K562 (cell line): ENCODE measurements at regions of chr1 and their contacts with region 1.

Region 1: DNA sequence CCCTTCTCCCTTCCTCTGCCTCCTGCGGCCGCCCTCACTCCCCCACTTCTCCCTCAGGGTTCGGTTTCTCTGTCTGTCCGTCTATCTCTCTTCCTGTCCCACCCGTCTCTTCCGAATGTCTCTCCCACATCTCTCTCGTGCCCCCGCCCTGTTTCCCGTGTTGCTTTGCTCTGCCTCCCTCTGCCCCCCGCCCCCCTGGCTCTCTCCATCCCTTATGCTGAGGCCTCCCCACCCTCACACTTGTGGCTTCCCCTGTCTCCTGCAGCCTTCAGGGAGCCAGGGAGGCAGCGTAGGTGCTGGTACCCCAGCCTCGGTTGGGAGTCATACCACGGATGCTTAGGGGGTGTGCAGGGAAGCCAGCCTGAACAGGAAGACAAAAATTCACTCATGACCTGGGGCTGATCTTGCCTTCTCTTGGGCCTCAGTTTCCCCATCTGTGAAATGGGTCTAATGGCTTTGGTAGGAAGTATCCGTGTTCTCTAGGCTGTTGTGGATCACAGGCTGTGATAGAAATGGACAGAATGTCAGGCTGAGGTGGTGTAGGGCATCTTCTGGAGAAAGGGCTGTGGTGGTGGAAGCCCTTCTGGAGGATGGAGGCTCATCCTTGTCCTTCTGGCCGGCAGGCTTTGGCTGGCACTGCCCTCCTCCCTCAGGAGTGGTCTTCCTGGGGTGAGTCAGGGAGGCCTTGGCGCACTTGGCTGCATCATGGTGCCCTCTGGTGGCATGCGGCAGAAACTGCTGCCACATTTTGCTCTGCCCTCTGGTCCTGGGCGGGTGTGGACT is 55.5 kb downstream of the FOXO6 start:
- DNase-seq: peak; percentile 75 to 86 (median 79)
- ATAC-seq: peak; percentile 88
- H3K4me3 ChIP-seq: no peak overlapping the region
- H3K27ac ChIP-seq: no peak overlapping the region
- H3K4me1 ChIP-seq: peaks cover 0 to 3% of the 10 kb centered on the region in 2 experiments; a peak in 1 of 5 replicates
- H3K27me3 ChIP-seq: peaks cover 5 to 9% of the 10 kb centered on the region in 2 experiments; a peak in 2 of 5 replicates
- CTCF ChIP-seq: peak; percentile 91 to 96 (median 95)
- EP300 ChIP-seq: no peak
- POLR2A ChIP-seq: no peak
- RAD21 ChIP-seq: peak; percentile 94 to 99

Region 2: GRCh38 chr1:40861224-40862003 is 555.3 kb before region 1 on chr1:
- CTCF ChIA-PET with region 1: no interaction called
- POLR2A ChIA-PET with region 1: no interaction called
- in situ Hi-C with region 1: no loop called
- intact Hi-C with region 1: no loop called
- DNase-seq: no peak
- ATAC-seq: no peak
- H3K4me3 ChIP-seq: peak overlapping the region; percentile 45
- H3K27ac ChIP-seq: no peak overlapping the region
- H3K4me1 ChIP-seq: peaks cover 29 to 52% of the 10 kb centered on the region in 2 experiments
- H3K27me3 ChIP-seq: peaks cover 0 to 2% of the 10 kb centered on the region in 2 experiments; a peak in 1 of 5 replicates
- CTCF ChIP-seq: no peak
- EP300 ChIP-seq: no peak
- POLR2A ChIP-seq: no peak
- RAD21 ChIP-seq: no peak

Region 3: DNA sequence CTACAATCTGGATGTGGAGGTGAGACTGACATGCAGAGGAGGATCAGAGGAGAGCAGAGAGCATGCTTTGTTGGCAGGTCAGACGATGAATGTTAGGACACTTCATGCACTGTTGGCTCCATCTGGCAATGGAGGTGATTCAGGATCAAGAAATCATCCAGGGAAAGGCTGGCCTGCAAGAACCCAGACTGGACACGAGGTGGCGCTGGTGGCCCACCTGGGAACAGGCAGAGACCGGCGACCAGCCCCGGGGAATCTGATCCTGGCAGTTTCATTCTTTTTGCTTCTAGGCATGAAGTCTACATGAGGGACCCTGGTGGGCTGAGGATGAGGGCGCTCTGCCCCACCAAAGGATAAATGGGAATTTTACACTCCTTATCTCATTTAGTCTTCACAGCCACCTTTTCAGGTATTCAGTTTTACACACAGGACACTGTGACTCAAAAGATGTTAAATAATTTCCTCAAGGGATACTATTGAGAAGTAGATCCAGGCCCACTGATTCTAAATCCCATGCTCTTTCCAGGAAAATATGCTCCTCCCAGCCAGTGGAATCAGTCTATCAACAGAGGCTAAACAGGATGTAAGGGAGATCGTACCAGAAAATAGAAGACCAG is 148.5 kb before region 1 on chr1:
- CTCF ChIA-PET with region 1: interaction called, 29 read pairs
- POLR2A ChIA-PET with region 1: no interaction called
- in situ Hi-C with region 1: no loop called
- intact Hi-C with region 1: loop called (anchors 1 kb)
- DNase-seq: peak; percentile 81 to 90 (median 89)
- ATAC-seq: peak; percentile 92
- H3K4me3 ChIP-seq: no peak overlapping the region
- H3K27ac ChIP-seq: no peak overlapping the region
- H3K4me1 ChIP-seq: no peaks in the 10 kb centered on the region; a peak in 1 of 5 replicates
- H3K27me3 ChIP-seq: peaks cover 20 to 24% of the 10 kb centered on the region in 2 experiments; a peak in 4 of 5 replicates
- CTCF ChIP-seq: peak; percentile 95 to 99 (median 98)
- EP300 ChIP-seq: no peak
- POLR2A ChIP-seq: no peak
- RAD21 ChIP-seq: peak; percentile 93 to 97

Region 4: DNA sequence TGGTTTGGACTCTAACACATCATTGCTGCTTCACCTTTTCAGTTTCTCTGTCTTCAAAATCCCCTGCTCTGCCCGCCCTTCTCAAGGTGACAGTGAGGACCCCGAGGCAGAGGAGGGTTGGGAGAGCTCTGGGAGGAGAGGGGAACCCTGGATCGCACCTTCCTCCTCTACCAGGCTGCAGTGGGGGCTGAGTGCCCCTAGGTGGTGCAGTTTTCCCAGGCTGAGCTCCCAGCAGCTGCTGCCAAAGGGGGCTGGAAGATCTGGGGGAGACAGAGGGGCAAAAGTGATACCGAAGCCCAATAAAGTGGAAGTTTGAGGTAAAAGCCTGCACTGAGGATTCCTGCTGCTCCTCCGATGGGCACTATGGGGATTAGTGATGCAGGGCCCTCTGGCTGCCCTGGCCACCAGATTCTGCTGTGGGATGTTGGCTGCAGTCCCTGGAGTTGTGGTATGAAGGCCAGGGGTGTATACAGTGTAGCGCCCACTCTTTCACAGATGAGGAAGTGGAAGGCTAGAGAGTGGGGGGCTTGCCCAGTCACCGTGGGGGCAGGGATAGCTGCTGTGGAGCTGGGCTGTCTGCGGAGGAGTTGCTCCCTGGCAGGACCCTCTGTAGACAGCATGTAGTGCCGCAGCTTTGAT is 133.9 kb before region 1 on chr1:
- CTCF ChIA-PET with region 1: interaction called, 12 read pairs
- POLR2A ChIA-PET with region 1: interaction called, 3 read pairs
- in situ Hi-C with region 1: no loop called
- intact Hi-C with region 1: loop called (anchors 1 kb)
- DNase-seq: peak; percentile 52 to 76 (median 70)
- ATAC-seq: peak; percentile 93
- H3K4me3 ChIP-seq: no peak overlapping the region
- H3K27ac ChIP-seq: no peak overlapping the region
- H3K4me1 ChIP-seq: no peaks in the 10 kb centered on the region
- H3K27me3 ChIP-seq: peaks cover 13 to 52% of the 10 kb centered on the region in 2 experiments; a peak in 4 of 5 replicates
- CTCF ChIP-seq: peak; percentile 82 to 92 (median 84)
- EP300 ChIP-seq: no peak
- POLR2A ChIP-seq: no peak
- RAD21 ChIP-seq: peak; percentile 56 to 82

Region 5: DNA sequence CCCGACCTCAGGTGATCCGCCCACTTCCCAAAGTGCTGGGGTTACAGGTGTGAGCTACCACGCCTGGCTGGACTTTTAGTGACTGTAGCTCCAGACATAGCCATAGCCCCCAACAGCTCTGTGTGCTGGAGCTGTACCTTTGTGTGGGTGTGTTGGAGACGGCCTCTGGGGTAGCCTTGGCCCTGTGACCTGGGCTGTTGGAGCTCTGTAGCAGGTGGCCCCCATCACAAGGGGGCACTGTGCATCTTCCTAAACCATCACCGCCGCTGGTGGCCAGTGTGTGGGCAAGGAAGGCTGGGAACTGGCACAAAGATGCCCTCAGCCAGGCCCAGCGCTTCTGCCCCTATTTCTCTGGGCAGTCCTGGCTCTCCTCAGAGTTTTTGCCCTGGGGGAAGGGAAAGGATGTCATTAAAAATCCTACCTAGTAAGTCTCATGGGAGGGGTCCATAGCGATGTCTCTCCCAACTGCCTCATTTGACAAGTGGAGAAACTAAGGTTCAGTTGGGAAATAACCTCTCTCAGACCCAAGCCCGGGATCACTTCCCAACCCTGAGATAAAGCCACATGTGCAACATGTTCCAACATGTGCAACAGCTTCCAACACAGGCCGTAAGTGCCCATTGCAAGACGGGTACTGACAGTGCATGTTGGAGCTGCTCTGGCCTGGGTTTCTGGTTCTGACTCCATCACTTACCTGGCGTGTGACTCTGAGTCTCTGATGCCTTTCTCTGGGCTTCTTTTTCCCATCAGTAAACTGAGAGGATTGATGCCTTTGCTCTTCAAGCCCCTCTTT is 93.7 kb before region 1 on chr1:
- CTCF ChIA-PET with region 1: interaction called, 60 read pairs
- POLR2A ChIA-PET with region 1: interaction called, 4 read pairs
- in situ Hi-C with region 1: loop called (anchors 5 kb)
- intact Hi-C with region 1: loop called (anchors 1 kb)
- DNase-seq: peak; percentile 60 to 75 (median 62)
- ATAC-seq: peak; percentile 95
- H3K4me3 ChIP-seq: no peak overlapping the region
- H3K27ac ChIP-seq: no peak overlapping the region
- H3K4me1 ChIP-seq: no peaks in the 10 kb centered on the region
- H3K27me3 ChIP-seq: peaks cover 15 to 48% of the 10 kb centered on the region in 2 experiments
- CTCF ChIP-seq: peak; percentile 85 to 90 (median 87)
- EP300 ChIP-seq: no peak
- POLR2A ChIP-seq: no peak
- RAD21 ChIP-seq: peak; percentile 94 to 96

Region 6: GRCh38 chr1:41329662-41330587 is 86.8 kb before region 1 on chr1:
- CTCF ChIA-PET with region 1: interaction called, 3 read pairs
- POLR2A ChIA-PET with region 1: interaction called, 4 read pairs
- in situ Hi-C with region 1: loop called (anchors 5 kb)
- intact Hi-C with region 1: no loop called
- DNase-seq: no peak
- ATAC-seq: no peak
- H3K4me3 ChIP-seq: no peak overlapping the region
- H3K27ac ChIP-seq: no peak overlapping the region
- H3K4me1 ChIP-seq: peaks cover 0 to 6% of the 10 kb centered on the region in 2 experiments; a peak in 4 of 5 replicates
- H3K27me3 ChIP-seq: peaks cover 0 to 21% of the 10 kb centered on the region in 2 experiments; a peak in 3 of 5 replicates
- CTCF ChIP-seq: no peak
- EP300 ChIP-seq: no peak
- POLR2A ChIP-seq: no peak
- RAD21 ChIP-seq: no peak

Region 7: DNA sequence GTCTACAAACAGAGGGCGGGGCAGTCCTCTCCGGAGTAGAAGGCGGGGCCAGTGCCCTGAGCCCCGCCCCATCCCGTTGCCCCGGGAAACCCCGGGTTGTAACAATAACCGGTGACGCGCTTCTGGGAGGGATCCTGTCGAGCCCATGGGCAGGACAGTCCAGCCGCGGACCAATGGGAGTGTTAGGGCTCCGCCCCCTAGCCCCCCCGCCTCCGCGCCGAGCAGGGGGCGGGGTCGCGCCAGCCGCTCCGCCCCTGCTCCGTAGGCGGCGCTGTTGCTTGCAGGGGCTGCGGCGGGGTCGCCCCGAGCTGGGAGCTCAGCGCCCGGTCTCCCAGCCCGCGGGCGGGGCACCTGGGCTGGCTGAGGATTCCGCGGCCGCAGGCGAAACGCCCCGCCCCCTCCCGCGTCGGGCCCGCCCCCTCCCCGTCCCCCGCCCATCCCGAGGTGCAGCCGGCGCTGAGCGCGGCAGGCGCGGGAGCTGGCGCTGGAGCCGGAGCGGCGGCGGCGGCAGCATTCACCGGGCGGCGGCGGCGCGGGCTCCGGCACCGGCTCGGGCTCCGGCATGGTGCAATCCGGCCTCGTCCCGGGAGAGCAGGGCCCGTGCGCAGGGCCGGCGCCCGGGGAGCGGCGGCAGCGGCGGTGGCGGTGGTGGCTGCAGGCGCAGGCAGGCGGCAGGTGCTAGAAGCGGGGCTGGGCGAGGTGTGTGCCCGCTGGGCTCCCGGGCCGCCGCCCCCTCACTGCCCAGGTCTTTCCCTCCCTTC is 55.6 kb before region 1 on chr1 and contains the start of gene FOXO6:
- CTCF ChIA-PET with region 1: interaction called, 3 read pairs
- POLR2A ChIA-PET with region 1: no interaction called
- in situ Hi-C with region 1: no loop called
- intact Hi-C with region 1: loop called (anchors 2 kb)
- DNase-seq: peak; percentile 98 to 100 (median 100)
- ATAC-seq: peak; percentile 97
- H3K4me3 ChIP-seq: peak within 1 kb of the TSS; percentile 42
- H3K27ac ChIP-seq: no peak within 1 kb of the TSS
- H3K4me1 ChIP-seq: peaks cover 22 to 48% of the 10 kb centered on the region in 2 experiments
- H3K27me3 ChIP-seq: peaks cover 11 to 40% of the 10 kb centered on the region in 2 experiments
- CTCF ChIP-seq: peak; percentile 76 to 89 (median 85)
- EP300 ChIP-seq: no peak
- POLR2A ChIP-seq: no peak
- RAD21 ChIP-seq: peak; percentile 56 to 64
- polyA plus RNA-seq, gene FOXO6: not detected